PC-3 (cell line): ENCODE measurements at regions of chr4 and their contacts with region 1.

Region 1: DNA sequence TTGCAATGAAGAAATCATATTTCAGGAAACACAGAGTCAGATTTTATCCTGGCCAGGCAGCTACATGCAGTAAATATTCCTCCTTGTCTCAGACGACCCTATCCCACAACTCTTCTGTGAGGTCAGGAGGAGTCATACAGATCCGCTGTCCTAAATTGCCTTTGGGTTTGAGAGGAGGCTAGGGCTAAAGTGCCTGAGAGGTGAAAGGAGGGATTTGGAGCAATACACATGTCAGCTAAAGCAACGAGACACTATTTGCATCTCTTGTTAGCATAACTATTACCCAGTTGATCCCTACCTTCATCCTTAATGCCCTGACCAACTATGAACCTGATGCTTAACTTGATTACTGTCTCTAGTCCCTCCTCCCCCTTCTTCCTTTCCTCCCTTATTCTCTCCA is 98.6 kb downstream of the TBC1D19 start:
- DNase-seq: no peak
- ATAC-seq: no peak
- H3K4me3 ChIP-seq: no peak overlapping the region
- H3K27ac ChIP-seq: no peak overlapping the region
- H3K4me1 ChIP-seq: peaks cover 3% of the 10 kb centered on the region; the same call in 1 of the 2 replicates
- H3K27me3 ChIP-seq: no peaks in the 10 kb centered on the region
- CTCF ChIP-seq: no peak

Region 2: GRCh38 chr4:26670903-26671537 is 11.4 kb before region 1 on chr4:
- CTCF ChIA-PET with region 1: no interaction called
- POLR2A ChIA-PET with region 1: no interaction called
- intact Hi-C with region 1: loop called (anchors 1 kb)
- DNase-seq: no peak
- ATAC-seq: no peak
- H3K4me3 ChIP-seq: no peak overlapping the region
- H3K27ac ChIP-seq: no peak overlapping the region
- H3K4me1 ChIP-seq: no peaks in the 10 kb centered on the region
- H3K27me3 ChIP-seq: no peaks in the 10 kb centered on the region
- CTCF ChIP-seq: no peak